ENCODE measurements at regions of chr18 and their contacts with region 1.

Region 1: DNA sequence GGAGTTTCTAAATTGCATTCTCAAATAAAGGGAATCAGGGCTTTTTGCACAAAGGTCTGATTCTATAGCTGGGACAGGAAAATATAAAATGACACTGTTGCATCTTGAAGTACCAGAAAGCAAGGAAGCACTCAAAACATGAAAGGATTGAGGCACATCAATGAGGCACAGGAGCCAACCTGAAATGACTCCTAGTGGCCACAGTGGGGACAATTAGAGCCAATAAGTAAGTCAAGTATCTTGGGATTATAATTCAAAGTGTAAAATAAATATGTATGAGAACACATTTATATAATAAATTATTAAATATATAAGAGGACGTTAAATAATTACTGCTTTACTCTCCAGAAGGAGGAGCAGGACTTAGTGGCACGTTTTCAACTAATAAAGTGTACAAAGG is 1259.5 kb upstream of the CDH2 start:
- DNase-seq: no peak
- ATAC-seq: no peak
- H3K4me3 ChIP-seq: no peak overlapping the region
- H3K27ac ChIP-seq: no peak overlapping the region
- H3K4me1 ChIP-seq: no peaks in the 10 kb centered on the region
- H3K27me3 ChIP-seq: no peaks in the 10 kb centered on the region
- CTCF ChIP-seq: no peak

Region 2: DNA sequence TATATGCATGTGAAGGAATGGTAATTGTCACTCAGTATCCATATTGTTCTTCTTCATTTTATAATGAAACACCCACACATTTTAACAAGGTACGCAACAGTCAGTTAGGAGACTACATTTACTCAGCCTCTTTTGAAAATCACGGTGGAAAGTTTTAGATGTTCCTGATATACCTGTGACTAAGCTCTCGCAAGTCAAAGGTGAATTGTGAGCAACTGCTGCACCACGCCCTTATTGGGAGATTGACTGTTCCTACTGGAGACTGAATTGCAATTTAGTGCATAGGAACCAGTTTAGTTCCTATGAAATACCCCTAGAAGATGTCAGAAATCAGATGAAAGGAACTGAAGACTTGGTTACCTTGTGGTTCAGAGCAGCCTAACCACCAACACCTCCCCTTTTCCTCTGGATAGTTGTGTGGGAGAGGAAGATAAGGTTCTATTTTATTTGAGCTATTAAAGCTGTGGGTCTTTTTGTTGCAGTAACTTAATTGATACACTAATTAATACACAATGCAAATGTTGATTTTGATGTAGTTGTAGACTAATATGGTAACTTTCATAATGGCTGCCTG is 20.9 kb after region 1 on chr18:
- intact Hi-C with region 1: loop called in 1 of 10 experiments (anchors 2 kb)
- DNase-seq: no peak
- ATAC-seq: no peak
- H3K4me3 ChIP-seq: no peak overlapping the region
- H3K27ac ChIP-seq: no peak overlapping the region
- H3K4me1 ChIP-seq: no peaks in the 10 kb centered on the region
- H3K27me3 ChIP-seq: no peaks in the 10 kb centered on the region
- CTCF ChIP-seq: no peak